HEK293 (cell line): ENCODE measurements at regions of chr9 and their contacts with region 1.

Region 1: DNA sequence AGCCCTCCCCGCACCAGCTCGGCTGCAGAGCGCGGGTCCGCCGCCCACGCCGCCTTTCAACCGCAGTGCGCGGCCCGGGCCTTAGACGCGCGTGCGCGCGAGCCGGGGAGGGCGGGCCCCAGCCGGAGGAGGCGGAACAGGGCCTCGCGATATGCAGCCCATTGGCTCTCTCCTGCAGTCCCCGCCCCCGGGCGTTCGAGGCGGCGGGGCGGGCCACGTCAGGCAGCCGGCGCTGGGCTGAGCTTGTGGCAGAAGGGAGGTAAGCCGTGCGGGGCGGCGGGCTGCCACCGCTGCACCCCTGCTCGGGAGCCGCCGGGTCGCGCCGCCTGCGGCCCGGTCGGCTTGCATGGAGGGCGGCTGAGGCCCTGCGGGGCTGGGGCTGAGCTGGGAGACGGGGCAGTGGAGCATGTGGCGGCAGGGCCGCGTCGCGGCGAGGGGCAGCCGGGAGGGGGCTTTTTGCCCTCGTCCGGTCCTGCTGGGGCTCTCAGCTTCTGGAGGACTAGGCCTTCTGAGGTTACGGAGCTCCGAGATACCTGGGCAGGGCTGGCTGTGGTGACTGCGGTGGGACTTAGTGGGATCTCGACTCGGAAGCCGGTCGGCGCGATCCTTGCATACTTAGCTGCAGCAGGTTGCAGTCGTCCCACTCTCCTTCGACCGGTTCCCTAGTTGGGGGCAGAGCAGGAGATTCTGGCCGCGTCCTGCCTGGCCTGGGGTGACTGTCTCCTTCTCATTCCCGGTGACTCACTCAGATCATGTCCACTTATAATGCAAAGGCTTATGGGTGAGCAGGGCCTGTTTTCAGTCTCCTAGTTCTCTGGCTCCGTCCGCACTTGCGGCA is at the start of gene FOCAD:
- H3K4me3 ChIP-seq: peak within 1 kb of the TSS; percentile 87
- H3K27ac ChIP-seq: peak within 1 kb of the TSS; percentile 91
- H3K4me1 ChIP-seq: peaks cover 8% of the 10 kb centered on the region; the same call in 1 of the 2 replicates
- CTCF ChIP-seq: no peak; the same call in 1 of the 2 replicates

Region 2: GRCh38 chr9:20658677-20659473 is 25.4 kb before region 1 on chr9:
- CTCF ChIA-PET with region 1: no interaction called
- POLR2A ChIA-PET with region 1: interaction called, 21 read pairs
- H3K4me3 ChIP-seq: peak overlapping the region; percentile 60
- H3K27ac ChIP-seq: peak overlapping the region; percentile 64; the same call in 1 of the 2 replicates
- H3K4me1 ChIP-seq: peaks cover 7% of the 10 kb centered on the region
- CTCF ChIP-seq: peak; percentile 44; the same call in 1 of the 2 replicates

Region 3: GRCh38 chr9:20701060-20701459 is 16.8 kb after region 1 on chr9:
- CTCF ChIA-PET with region 1: interaction called, 4 read pairs
- POLR2A ChIA-PET with region 1: interaction called, 14 read pairs
- H3K4me3 ChIP-seq: no peak overlapping the region
- H3K27ac ChIP-seq: no peak overlapping the region
- H3K4me1 ChIP-seq: peaks cover 8% of the 10 kb centered on the region; the same call in 1 of the 2 replicates
- CTCF ChIP-seq: no peak